Activated naive CD4-positive, alpha-beta T cell treated with anti-CD3 and anti-CD28 coated beads for 36 hours (primary cell): ENCODE measurements at regions of chr10 and their contacts with region 1.

Region 1: DNA sequence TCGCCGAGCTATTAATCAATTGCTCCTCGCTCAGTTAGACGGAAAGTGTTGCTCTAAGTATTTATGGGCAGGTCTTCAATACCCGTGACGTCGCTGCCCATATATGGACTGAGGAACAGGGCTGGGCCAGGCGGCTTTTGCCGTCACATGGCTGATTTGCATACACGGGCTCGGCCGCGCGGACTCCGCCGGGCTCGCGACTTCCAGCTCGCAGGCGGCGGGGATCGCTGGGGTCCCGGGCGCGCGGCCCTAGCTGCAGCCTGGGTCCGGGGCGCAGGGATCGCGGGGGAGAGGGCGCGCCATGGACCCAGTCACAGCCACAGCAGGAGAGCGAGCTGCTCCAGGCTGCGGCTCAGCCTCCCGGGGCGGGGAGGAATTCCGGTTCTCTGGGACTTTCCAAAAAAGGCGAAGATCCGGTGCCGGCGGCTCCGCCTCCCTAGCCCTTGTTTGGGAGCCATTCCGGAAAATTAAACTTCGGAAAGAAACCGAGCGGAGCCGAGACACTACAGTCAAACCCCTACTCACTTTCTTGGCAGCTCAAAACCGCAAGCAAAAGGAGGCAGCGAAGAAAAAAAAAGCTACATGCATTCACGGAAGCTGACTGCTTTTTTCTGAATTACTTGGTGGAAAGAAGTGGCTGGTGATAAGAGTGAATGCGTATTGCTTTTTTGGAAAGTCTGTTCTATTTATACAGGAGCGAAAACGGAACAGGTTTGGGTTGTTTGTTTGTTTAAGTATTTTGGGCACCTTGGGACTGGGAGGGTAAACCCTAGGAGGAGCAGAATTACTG is at the start of gene EGR2:
- DNase-seq: peak; percentile 98
- H3K4me3 Mint-ChIP-seq: peak within 1 kb of the TSS; percentile 95
- H3K27ac Mint-ChIP-seq: peak within 1 kb of the TSS; percentile 98
- H3K4me1 Mint-ChIP-seq: peaks cover 41% of the 10 kb centered on the region
- H3K27me3 Mint-ChIP-seq: peaks cover 14% of the 10 kb centered on the region
- total RNA-seq, gene EGR2: 18.5 to 21.4 TPM

Region 2: DNA sequence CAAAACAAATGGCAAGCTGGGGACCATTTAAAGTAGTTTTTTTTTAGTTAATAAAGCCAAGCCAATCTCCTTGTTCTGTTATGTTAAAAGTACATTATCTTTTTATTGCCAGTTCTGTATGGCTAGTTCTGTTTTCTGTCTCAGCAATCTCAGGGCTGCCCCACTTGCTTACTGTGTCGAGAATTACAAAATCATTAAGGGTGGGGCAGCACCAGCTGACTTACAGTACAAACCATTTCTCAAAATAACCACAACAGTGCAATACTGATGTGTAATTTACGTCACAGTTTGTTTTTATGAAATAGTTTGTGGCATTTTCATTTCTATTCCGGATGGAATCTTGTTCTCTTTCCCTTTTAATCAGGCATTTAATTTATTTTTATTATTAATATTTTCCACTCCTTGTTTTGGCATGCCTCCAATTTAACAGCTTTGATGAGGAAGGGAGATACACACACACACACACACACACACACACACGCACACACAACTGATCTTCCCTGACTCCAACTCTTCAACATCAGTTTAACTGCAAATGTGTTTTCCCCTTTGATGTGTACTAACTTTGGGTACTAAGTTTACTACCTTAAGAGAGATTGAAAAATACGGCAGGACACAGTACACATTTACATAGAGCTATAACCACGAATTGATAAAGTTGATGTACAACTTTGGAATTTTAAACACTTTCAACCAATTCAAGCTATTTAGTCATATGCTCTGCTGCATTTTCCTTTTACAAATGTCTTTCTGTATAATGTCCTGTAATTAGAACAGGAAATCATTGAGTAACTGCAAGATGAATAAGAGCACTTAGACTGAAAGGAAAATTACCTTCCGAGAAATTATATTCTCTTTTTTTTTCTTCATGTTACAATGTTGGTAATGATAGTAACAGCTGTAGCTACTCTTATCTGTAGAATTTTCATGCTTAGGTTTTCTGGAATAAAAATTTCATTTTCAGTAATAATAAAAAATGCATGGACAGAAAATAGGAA is 823.6 kb before region 1 on chr10:
- CTCF ChIA-PET with region 1: no interaction called
- intact Hi-C with region 1: loop called (anchors 1 kb)
- DNase-seq: peak; percentile 84
- H3K4me3 Mint-ChIP-seq: peak overlapping the region; percentile 47
- H3K27ac Mint-ChIP-seq: peak overlapping the region; percentile 96
- H3K4me1 Mint-ChIP-seq: peaks cover 85% of the 10 kb centered on the region
- H3K27me3 Mint-ChIP-seq: no peaks in the 10 kb centered on the region

Region 3: GRCh38 chr10:62437696-62438095 is 378.8 kb before region 1 on chr10:
- CTCF ChIA-PET with region 1: interaction called, 5 read pairs
- intact Hi-C with region 1: loop called (anchors 1 kb)
- DNase-seq: no peak
- H3K4me3 Mint-ChIP-seq: no peak overlapping the region
- H3K27ac Mint-ChIP-seq: no peak overlapping the region
- H3K4me1 Mint-ChIP-seq: peaks cover 19% of the 10 kb centered on the region
- H3K27me3 Mint-ChIP-seq: peaks cover 10% of the 10 kb centered on the region

Region 4: DNA sequence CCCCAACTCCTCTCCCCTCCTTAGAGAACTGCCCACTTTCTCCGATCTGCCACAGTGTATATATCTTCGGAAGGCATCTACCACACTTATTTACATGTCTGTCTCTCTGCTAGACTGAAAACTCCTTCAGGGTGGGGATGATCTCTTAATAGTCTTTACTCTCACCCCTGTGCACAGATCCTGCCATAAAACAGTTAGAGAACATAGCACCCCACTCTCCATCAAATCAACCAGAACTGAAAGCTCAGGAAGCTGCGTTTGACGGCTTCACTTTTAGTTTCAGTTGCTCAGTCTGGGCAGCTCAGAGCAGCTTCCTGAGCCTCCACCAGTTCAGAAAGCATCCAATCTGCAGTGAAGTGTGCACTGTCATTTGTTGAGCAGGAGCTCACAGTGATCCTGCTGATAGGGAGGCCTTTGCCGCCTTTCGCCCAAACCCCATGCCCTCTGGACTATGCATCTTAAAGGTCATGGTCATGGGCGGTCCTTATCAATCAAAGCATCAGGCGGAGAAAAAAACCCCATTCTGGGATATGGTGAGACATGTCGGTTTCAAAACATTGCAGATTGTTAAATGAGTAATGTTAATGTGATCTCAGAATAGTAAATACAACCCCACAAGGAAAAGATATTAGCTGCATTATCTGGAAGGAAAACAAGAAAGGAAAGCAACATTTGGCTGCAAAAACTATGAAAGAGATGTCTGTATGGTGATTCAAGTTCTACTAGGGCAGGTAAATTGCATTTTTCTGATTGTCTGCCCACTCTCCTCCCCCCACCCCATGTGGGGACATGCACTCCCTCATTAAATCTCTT is 179.1 kb before region 1 on chr10:
- CTCF ChIA-PET with region 1: interaction called, 26 read pairs
- intact Hi-C with region 1: loop called (anchors 1 kb)
- DNase-seq: peak; percentile 81
- H3K4me3 Mint-ChIP-seq: no peak overlapping the region
- H3K27ac Mint-ChIP-seq: no peak overlapping the region
- H3K4me1 Mint-ChIP-seq: peaks cover 14% of the 10 kb centered on the region
- H3K27me3 Mint-ChIP-seq: no peaks in the 10 kb centered on the region

Region 5: DNA sequence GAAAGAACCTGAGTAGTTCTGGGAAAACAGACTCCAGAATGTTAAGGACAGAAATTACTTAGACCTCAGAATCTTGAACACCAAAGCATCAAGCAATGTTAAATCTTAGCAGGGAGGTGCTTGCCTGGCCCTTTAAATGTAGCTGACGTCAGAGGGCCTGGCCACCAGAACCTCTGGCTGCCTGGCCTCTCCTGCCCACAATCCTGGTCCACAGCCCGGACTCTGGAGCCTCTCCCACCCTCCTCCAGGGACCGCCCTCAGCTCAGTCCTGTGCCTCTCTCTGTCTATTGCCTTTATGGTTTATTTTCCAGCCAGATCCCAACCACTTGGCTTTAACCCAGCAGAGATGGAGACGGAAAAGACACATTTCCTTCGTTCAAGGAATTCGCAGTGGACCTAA is 41.8 kb after region 1 on chr10:
- CTCF ChIA-PET with region 1: no interaction called
- intact Hi-C with region 1: loop called (anchors 1 kb)
- DNase-seq: no peak
- H3K4me3 Mint-ChIP-seq: no peak overlapping the region
- H3K27ac Mint-ChIP-seq: no peak overlapping the region
- H3K4me1 Mint-ChIP-seq: peaks cover 32% of the 10 kb centered on the region
- H3K27me3 Mint-ChIP-seq: peaks cover 12% of the 10 kb centered on the region

Region 6: GRCh38 chr10:63227207-63227915 is 410.8 kb after region 1 on chr10:
- CTCF ChIA-PET with region 1: no interaction called
- intact Hi-C with region 1: loop called (anchors 2 kb)
- DNase-seq: no peak
- H3K4me3 Mint-ChIP-seq: no peak overlapping the region
- H3K27ac Mint-ChIP-seq: peak overlapping the region; percentile 97
- H3K4me1 Mint-ChIP-seq: peaks cover 56% of the 10 kb centered on the region
- H3K27me3 Mint-ChIP-seq: no peaks in the 10 kb centered on the region